Heart right ventricle (tissue), 16 donors: ENCODE measurements at regions of chr5 and their contacts with region 1.

Region 1: GRCh38 chr5:78320401-78320800 is 25.9 kb upstream of the AP3B1 start:
- DNase-seq: no peak
- ATAC-seq: no peak
- H3K4me3 ChIP-seq: no peak overlapping the region
- H3K27ac ChIP-seq: no peak overlapping the region
- H3K4me1 ChIP-seq: no peaks in the 10 kb centered on the region
- H3K27me3 ChIP-seq: no peaks in the 10 kb centered on the region
- CTCF ChIP-seq: peak in 8 of 9 donors; percentile 15 to 72 (median 64)

Region 2: DNA sequence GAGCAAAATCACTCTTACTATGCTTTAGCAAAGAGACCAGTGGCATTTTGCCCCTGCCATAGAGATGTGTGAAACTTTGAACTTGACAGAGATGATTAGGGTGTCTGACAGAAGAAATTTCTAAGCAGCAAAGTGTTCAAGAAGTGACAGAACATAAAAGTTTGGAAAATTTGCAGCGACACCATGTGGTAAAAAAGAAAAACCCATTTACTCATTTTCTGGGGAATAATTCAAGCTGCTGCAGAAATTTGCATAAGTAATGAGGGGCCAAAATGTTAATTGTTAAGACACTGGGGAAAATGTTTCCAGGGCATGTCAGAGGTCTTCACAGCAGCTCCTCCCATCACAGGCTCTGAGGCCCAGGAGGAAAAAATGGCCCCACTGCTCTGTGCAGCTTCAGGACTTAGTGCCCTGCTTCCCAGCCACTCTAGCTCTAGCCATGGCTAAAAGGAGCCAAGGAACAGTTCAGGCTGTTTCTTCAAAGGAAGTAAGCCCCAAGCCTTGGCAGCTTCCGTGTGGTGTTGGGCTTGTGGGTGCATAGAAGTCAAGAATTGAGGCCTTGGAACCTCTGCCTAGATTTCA is 19.8 kb before region 1 on chr5:
- intact Hi-C with region 1: no loop called
- DNase-seq: no peak
- ATAC-seq: no peak
- H3K4me3 ChIP-seq: no peak overlapping the region
- H3K27ac ChIP-seq: no peak overlapping the region
- H3K4me1 ChIP-seq: peaks cover 2 to 5% (median 3%) of the 10 kb centered on the region in 9 donors
- H3K27me3 ChIP-seq: no peaks in the 10 kb centered on the region
- CTCF ChIP-seq: peak in 7 of 9 donors; percentile 24 to 54 (median 38)

Region 3: DNA sequence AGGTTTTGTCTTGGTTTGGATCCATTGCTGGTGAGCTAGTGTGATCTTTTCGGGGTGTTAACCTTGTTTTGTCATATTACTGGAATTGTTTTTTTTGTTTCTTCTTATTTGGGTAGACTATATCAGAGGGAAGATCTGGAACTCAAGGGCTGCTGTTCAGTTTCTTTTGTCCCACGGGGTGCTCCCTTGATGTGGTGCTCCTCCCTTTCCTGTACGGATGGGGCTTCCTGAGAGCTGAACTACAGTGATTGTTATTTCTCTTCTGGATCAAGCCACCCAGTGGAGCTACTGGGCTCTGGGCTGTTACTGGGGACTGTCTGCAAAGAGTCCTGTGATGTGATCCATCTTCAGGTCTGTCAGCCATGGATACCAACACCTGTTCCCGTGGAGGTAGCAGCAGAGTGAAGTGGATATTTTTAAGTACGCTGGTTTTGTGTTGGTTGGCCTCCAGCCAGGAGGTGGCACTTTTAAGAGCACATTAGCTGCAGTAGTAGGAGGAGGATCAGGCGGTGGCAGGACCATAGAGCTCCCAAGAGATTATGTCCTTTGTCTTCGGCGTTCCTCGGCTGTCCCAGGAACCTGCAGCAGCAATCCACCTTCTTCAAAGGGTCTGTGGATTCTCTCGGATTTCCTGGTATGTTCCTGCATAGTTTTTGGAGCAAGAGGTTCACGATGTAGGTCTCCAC is 67.2 kb after region 1 on chr5:
- intact Hi-C with region 1: no loop called
- DNase-seq: peak in 1 of 2 donors; percentile 12
- ATAC-seq: peak in 5 of 8 donors; percentile 42 to 85 (median 73)
- H3K4me3 ChIP-seq: no peak overlapping the region
- H3K27ac ChIP-seq: peak overlapping the region in 2 of 10 donors; percentile 6 to 34
- H3K4me1 ChIP-seq: peaks cover 0 to 8% (median 0%) of the 10 kb centered on the region in 9 donors
- H3K27me3 ChIP-seq: no peaks in the 10 kb centered on the region
- CTCF ChIP-seq: peak in 1 of 9 donors; percentile 7

Region 4: GRCh38 chr5:78458843-78459242 is 138.4 kb after region 1 on chr5:
- intact Hi-C with region 1: no loop called
- DNase-seq: no peak
- ATAC-seq: no peak
- H3K4me3 ChIP-seq: no peak overlapping the region
- H3K27ac ChIP-seq: no peak overlapping the region
- H3K4me1 ChIP-seq: no peaks in the 10 kb centered on the region
- H3K27me3 ChIP-seq: no peaks in the 10 kb centered on the region
- CTCF ChIP-seq: no peak

Region 5: GRCh38 chr5:78527054-78527859 is 206.9 kb after region 1 on chr5:
- intact Hi-C with region 1: loop called in 3 of 10 experiments (anchors 5 to 10 kb)
- DNase-seq: peak in 1 of 2 donors; percentile 87
- ATAC-seq: peak; percentile 85 to 93 (median 92)
- H3K4me3 ChIP-seq: no peak overlapping the region
- H3K27ac ChIP-seq: peak overlapping the region in 8 of 10 donors; percentile 38 to 85 (median 59)
- H3K4me1 ChIP-seq: peaks cover 0 to 83% (median 37%) of the 10 kb centered on the region in 9 donors
- H3K27me3 ChIP-seq: no peaks in the 10 kb centered on the region
- CTCF ChIP-seq: no peak

Region 6: GRCh38 chr5:78610163-78610583 is 289.8 kb after region 1 on chr5:
- intact Hi-C with region 1: no loop called
- DNase-seq: peak in 1 of 2 donors; percentile 53
- ATAC-seq: peak in 7 of 8 donors; percentile 44 to 87 (median 70)
- H3K4me3 ChIP-seq: no peak overlapping the region
- H3K27ac ChIP-seq: peak overlapping the region in 7 of 10 donors; percentile 29 to 64 (median 55)
- H3K4me1 ChIP-seq: peaks cover 0 to 38% (median 14%) of the 10 kb centered on the region in 9 donors
- H3K27me3 ChIP-seq: no peaks in the 10 kb centered on the region
- CTCF ChIP-seq: no peak

Region 7: DNA sequence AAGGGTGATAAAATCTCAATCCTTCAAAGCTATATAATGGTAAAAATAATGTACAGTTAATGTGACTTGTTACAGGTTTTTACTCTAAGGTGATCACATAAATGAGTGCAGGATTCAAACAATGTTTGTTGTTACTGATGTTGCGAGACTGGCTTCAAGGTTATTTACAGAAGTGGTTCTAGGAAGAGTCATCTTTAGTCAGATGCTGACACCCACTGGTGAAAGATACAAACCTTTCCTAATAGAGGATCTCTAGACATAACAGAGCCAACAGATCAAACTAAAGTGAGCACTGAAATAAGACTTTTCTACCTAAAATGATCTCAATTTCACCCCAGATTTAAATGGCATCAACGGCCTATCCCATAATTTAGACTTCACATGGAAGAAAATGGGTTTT is 644.5 kb after region 1 on chr5:
- intact Hi-C with region 1: loop called in 6 of 10 experiments (anchors 5 to 10 kb)
- DNase-seq: peak in 1 of 2 donors; percentile 41
- ATAC-seq: peak; percentile 69 to 90 (median 81)
- H3K4me3 ChIP-seq: no peak overlapping the region
- H3K27ac ChIP-seq: no peak overlapping the region
- H3K4me1 ChIP-seq: no peaks in the 10 kb centered on the region
- H3K27me3 ChIP-seq: no peaks in the 10 kb centered on the region
- CTCF ChIP-seq: peak; percentile 8 to 76 (median 55)